ENCODE measurements at regions of chr1 and their contacts with region 1.

Region 1: DNA sequence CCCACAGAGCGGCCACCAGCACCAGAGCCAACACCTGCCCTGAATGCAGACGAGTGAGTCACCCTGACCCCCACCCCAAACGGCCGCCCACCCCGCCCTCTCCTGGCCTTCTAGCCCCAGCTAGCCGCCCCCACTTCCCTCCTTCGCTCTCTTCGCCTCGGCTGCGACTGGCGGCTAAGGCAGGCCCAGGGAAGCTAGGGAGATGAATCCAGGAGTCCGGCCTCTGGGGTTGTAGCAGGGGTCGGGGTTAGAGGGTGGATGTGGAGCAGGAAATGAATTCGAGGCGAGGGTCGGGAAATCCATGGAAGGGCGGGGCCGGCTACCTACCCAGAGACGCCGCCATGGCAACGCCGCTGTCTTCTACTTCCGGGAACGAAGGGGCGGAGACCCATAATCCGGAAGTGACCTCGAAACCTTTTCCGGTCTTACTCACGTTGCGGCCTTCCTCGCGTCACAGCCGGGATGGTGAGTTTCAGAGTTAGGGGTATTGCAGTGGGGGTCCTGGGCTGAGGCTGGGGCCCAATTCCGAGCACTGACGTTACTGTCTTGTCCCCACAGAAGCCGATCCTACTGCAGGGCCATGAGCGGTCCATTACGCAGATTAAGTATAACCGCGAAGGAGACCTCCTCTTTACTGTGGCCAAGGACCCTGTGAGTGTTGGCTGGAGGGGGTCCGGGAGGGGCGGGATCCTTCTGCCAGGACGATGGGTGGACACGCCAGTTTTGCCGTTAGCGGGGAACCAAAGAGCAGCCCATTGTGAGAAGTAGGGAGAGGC is at the starts of genes EIF3I and TMEM234:
- DNase-seq: peak; percentile 92
- H3K4me3 Mint-ChIP-seq: peak within 1 kb of the TSS; percentile 90
- H3K27ac Mint-ChIP-seq: peak within 1 kb of the TSS; percentile 98
- H3K4me1 Mint-ChIP-seq: peaks cover 9% of the 10 kb centered on the region
- H3K27me3 Mint-ChIP-seq: no peaks in the 10 kb centered on the region
- CTCF ChIP-seq: no peak
- total RNA-seq, gene EIF3I: 253 and 259 TPM in 2 replicates
- total RNA-seq, gene TMEM234: 22.2 and 27.3 TPM in 2 replicates

Region 2: DNA sequence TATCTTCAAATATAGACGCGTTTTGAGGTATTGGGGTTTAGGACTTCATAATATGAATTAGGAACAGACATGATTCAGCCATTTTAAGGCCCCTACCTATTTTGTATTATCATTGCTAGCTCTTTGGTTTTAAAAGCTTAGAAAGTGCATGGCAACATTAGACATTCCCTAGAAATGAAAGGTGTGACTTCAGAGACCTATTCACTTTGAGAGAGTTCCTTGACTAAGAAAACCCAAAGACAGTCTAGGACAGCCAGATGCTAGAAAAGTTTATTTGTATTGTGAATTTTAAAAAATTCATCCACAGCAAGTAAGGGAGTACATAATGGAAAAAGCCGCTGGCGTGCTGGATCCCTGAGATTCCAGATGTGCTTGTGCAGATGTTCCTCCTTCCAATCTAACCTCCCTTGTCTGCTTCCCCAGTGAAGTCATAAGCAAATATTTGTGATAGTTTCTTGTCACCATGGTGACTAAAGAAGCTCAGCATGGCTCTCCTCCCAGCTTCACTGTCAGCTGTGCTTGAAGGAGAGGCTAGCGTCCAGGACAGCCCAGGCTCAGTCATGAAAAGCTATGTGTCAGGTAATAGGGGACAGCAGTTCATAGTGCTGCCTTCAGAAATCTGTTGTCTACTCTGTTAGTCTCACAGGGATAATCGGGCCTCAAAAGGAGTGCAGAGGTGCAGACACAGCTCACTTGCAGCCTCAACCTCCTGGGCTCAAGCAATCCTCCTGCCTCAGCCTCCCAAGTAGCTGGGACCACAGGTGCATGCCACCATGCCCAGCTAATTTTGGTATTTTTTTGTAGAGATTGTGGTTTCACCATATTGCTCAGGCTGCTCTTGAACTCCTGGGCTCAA is 79.5 kb before region 1 on chr1:
- CTCF ChIA-PET with region 1: no interaction called
- POLR2A ChIA-PET with region 1: no interaction called
- intact Hi-C with region 1: no loop called
- DNase-seq: peak; percentile 12
- H3K4me3 Mint-ChIP-seq: no peak overlapping the region
- H3K27ac Mint-ChIP-seq: peak overlapping the region; percentile 64
- H3K4me1 Mint-ChIP-seq: peaks cover 46% of the 10 kb centered on the region
- H3K27me3 Mint-ChIP-seq: no peaks in the 10 kb centered on the region
- CTCF ChIP-seq: no peak

Region 3: GRCh38 chr1:32299327-32299726 is 77.2 kb after region 1 on chr1:
- CTCF ChIA-PET with region 1: no interaction called
- POLR2A ChIA-PET with region 1: no interaction called
- intact Hi-C with region 1: no loop called
- DNase-seq: no peak
- H3K4me3 Mint-ChIP-seq: no peak overlapping the region
- H3K27ac Mint-ChIP-seq: no peak overlapping the region
- H3K4me1 Mint-ChIP-seq: peaks cover 5% of the 10 kb centered on the region
- H3K27me3 Mint-ChIP-seq: no peaks in the 10 kb centered on the region
- CTCF ChIP-seq: no peak

Region 4: DNA sequence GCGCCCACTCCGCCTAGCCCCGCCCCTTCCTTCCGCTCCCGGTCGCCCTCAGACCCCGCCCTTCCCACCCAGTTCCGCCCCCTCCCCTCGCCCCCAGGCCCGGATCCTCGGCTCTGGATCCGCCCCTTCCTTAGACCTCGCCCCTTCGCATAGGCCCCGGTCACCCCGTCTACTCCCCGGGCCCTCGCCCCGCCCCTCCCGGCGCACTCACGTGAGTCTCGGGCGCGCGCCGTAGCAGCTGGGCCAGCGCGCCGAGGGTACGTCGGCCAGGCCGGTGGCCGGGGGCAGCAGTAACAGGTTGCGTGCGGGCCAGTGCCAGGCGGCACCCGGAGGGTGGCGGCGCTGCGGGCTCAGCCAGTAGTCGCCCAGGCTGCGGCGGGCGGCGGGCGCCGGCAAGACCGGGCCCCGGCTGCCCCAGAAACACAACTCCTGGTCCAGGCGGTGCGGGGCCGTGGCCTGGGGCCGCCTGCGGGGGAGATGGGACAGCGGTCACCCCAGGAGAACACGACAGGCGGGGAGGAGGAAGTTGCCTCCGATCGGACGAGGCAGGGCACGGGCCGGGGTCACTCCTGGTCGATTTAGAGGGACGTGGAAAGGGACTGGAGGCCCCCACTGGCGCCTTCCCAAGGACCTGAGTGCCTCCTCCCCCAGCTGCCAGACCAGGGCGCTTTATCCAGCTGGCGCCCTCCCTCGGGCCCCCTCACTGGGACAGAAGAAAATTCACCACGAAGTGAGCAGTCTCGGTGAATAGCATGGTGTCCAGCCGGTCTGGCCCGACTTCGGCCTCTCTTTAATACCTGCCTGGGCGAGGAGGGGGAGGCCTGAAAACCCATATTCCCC is 129.5 kb after region 1 on chr1:
- CTCF ChIA-PET with region 1: no interaction called
- POLR2A ChIA-PET with region 1: no interaction called
- intact Hi-C with region 1: loop called (anchors 2 kb)
- DNase-seq: peak; percentile 95
- H3K4me3 Mint-ChIP-seq: peak overlapping the region; percentile 82
- H3K27ac Mint-ChIP-seq: peak overlapping the region; percentile 94
- H3K4me1 Mint-ChIP-seq: peaks cover 11% of the 10 kb centered on the region
- H3K27me3 Mint-ChIP-seq: no peaks in the 10 kb centered on the region
- CTCF ChIP-seq: no peak

Region 5: GRCh38 chr1:33080885-33081553 is 858.9 kb after region 1 on chr1 and contains the start of gene AZIN2:
- CTCF ChIA-PET with region 1: no interaction called
- POLR2A ChIA-PET with region 1: no interaction called
- intact Hi-C with region 1: no loop called
- DNase-seq: peak; percentile 94
- H3K4me3 Mint-ChIP-seq: peak within 1 kb of the TSS; percentile 75
- H3K27ac Mint-ChIP-seq: peak within 1 kb of the TSS; percentile 59
- H3K4me1 Mint-ChIP-seq: peaks cover 20% of the 10 kb centered on the region
- H3K27me3 Mint-ChIP-seq: no peaks in the 10 kb centered on the region
- CTCF ChIP-seq: no peak
- total RNA-seq, gene AZIN2: 1.6 and 4.3 TPM in 2 replicates

Region 6: DNA sequence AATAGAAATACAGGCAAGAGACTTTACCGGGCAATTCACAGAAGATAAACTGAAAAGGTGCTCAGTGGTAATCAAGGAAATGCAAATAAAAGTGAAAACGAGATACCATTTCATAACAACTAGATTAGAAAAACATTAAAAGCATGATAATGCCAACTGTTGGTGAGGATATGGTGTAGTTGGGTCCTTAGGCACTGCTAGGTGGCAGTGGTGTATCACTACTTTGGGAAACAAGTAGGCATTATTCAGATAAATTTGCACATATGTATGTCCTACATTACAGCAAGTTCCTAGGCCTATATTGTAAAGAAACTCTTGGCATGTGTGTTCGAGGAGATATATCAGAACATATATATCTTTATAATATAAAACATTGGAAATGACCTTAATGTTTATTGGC is 889.8 kb after region 1 on chr1:
- CTCF ChIA-PET with region 1: no interaction called
- POLR2A ChIA-PET with region 1: no interaction called
- intact Hi-C with region 1: no loop called
- DNase-seq: peak; percentile 29
- H3K4me3 Mint-ChIP-seq: no peak overlapping the region
- H3K27ac Mint-ChIP-seq: no peak overlapping the region
- H3K4me1 Mint-ChIP-seq: no peaks in the 10 kb centered on the region
- H3K27me3 Mint-ChIP-seq: no peaks in the 10 kb centered on the region
- CTCF ChIP-seq: peak; percentile 27